ENCODE measurements at regions of chr17 and their contacts with region 1.

Region 1: DNA sequence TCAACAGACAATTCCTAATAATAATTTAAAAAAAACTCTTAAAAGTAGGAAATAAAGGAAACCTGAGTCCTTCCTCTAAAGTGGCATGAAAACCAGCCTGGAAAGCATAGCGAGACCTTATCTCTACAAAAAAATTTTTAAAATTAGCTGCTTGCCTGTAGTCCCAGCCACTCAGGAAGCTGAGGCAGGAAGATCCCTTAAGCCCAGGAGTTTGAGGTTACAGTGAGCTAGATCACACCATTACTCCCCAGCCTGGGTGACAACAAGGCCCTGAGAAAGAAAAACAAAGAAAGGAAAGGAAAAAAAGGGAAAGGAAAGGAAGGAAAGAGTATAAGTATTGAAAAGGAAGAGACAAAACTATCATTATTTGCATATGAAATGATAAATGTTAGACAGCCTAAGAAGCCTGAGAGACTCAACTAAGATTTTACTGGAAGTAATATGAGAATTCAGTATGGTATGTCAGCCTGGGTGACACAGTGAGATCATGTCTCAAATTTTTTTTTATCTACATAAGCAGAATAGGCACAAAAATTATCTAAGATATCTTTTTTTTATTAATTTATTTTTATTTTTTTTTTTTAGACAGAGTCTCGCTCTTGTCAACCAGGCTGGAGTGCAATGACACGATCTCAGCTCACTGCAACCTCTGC is 113.0 kb downstream of the GOSR1 start:
- DNase-seq: no peak
- ATAC-seq: no peak
- H3K4me3 Mint-ChIP-seq: no peak overlapping the region
- H3K27ac Mint-ChIP-seq: no peak overlapping the region
- H3K4me1 Mint-ChIP-seq: no peaks in the 10 kb centered on the region
- H3K27me3 Mint-ChIP-seq: no peaks in the 10 kb centered on the region
- CTCF ChIP-seq: no peak

Region 2: GRCh38 chr17:30547778-30548573 is 42.2 kb before region 1 on chr17:
- CTCF ChIA-PET with region 1: no interaction called
- POLR2A ChIA-PET with region 1: no interaction called
- intact Hi-C with region 1: loop called (anchors 2 kb)
- DNase-seq: no peak
- ATAC-seq: no peak
- H3K4me3 Mint-ChIP-seq: no peak overlapping the region
- H3K27ac Mint-ChIP-seq: no peak overlapping the region
- H3K4me1 Mint-ChIP-seq: peaks cover 44% of the 10 kb centered on the region
- H3K27me3 Mint-ChIP-seq: no peaks in the 10 kb centered on the region
- CTCF ChIP-seq: no peak

Region 3: DNA sequence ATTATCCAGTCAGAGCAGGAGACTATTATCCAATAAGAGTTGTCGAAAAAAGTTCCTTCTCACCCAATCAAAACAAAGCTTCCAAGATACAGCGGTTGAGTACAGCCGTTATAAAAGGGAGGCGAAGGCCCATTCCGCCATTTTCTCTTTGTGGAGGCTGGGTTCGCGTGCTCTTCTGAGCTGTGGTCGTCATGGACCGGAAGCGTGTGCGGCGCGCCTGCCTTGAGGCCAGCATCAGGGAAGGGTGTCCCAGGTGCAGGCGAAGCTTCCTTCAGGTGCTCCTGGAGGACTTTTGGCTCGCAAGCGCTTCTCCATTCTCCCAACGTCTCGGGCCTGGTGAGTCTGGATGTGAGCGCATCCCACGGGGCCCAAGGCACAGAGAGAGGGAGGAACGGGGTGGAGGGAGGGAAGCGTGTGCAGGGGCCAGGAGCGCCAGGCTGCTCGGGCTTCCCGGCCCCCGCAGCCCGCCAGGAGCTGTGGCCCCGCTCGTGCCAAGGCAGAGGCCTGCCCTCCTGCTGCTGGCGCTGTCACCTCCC is 13.8 kb before region 1 on chr17:
- CTCF ChIA-PET with region 1: no interaction called
- POLR2A ChIA-PET with region 1: no interaction called
- intact Hi-C with region 1: no loop called
- DNase-seq: no peak
- ATAC-seq: no peak
- H3K4me3 Mint-ChIP-seq: no peak overlapping the region
- H3K27ac Mint-ChIP-seq: no peak overlapping the region
- H3K4me1 Mint-ChIP-seq: no peaks in the 10 kb centered on the region
- H3K27me3 Mint-ChIP-seq: no peaks in the 10 kb centered on the region
- CTCF ChIP-seq: no peak

Measured in activated B cell treated with CpG ODN at 0.5 μM for 24 hours (primary cell).